Calu3 (cell line): ENCODE measurements at regions of chr1 and their contacts with region 1.

Region 1: DNA sequence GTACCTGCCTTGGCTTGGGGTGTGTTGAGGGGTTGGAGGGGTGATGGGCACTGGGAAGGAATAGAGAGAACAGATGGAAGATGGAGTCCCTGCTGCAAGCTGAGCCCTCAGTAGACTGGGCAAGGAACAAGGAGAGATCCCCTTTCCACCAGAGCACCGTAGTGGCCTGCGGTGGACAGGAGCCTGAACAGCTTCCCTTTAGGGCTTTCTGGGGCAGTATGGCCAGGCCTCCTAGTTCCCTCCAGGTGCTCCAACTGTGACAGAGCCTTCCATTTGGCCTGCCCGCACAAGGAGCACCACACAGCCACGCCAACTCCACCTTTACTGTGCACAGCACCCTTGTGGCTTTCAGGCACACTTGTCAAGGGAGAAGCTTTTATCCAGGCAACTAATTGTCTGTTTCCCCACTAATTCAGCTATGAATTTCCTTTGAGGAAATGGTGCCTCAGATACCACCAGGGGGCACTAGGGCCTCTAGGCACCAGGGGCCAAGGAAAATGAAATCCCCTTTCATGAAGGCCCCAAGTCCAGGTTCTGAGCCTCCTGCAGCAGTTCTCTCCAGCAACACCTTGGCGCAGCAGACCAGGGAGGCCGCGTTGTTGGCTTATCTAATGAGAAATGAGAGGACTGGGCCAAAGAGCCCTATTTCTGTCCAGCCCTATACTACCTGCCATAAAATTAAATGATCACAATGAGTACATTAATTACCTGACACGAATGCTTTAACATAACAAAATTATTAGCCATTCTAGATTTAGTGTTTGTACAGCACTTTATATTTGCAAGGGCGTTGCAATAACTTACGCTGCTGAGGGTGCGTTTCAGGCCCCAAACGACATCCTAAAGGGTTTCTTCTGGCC is 23.1 kb upstream of the ERI3 start:
- DNase-seq: peak; percentile 65
- H3K4me3 Mint-ChIP-seq: no peak overlapping the region
- H3K27ac Mint-ChIP-seq: no peak overlapping the region
- H3K4me1 Mint-ChIP-seq: no peaks in the 10 kb centered on the region
- H3K27me3 Mint-ChIP-seq: peaks cover 20% of the 10 kb centered on the region
- CTCF ChIP-seq: peak; percentile 71

Region 2: DNA sequence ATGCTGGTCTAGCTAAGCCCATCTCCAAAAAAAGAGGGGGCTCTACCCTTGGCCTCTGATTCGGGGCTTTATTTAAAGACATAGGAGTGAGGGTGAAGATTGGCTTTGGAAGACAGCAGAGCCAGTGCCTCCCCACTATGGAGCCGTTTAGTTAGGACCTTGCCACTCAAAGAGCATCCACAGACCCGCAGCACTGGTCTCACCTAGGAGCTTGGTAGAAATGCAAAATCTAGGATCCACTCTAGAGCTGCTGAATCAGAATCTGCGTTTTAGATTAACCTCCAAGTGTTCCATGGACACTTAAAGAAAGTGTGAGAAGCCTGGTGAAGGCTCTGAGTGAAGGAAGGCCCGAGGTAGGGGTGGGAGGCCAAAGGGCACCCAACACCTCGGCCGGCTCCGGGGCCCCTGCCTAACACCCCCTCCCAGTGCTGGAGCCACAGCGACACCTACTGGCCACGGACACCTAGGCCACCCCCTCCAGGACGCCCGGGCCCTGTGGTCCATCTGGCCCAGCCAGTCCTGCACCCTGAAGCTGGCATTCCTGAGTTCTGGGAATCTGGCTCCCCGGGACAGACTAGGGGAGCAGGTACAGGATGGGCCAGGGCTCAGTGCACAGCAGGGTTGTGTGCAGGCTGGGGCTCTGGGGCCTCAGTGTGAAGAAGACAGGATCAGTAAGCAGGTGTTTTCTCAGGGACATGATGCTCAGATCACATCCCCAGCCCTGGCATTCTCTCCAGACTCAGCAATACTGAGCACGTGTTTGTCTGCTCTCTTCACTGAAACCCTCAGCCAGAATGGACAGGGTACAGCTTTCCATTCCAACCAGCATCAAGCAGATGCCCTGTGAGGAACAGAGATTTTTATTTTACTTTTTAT is 217.0 kb after region 1 on chr1:
- CTCF ChIA-PET with region 1: interaction called, 23 read pairs
- intact Hi-C with region 1: loop called (anchors 1 kb)
- DNase-seq: peak; percentile 87
- H3K4me3 Mint-ChIP-seq: no peak overlapping the region
- H3K27ac Mint-ChIP-seq: no peak overlapping the region
- H3K4me1 Mint-ChIP-seq: no peaks in the 10 kb centered on the region
- H3K27me3 Mint-ChIP-seq: peaks cover 14% of the 10 kb centered on the region
- CTCF ChIP-seq: peak; percentile 87